ENCODE measurements at regions of chr9 and their contacts with region 1.

Region 1: GRCh38 chr9:109440797-109441287 is 57.3 kb downstream of the PTPN3 start:
- DNase-seq: peak; percentile 82 to 90
- ATAC-seq: peak; percentile 96
- H3K4me3 ChIP-seq: no peak overlapping the region
- H3K27ac ChIP-seq: peak overlapping the region; percentile 34 to 57; a peak in 5 of 6 replicates
- H3K4me1 ChIP-seq: peaks cover 20% of the 10 kb centered on the region
- CTCF ChIP-seq: peak; percentile 85
- EP300 ChIP-seq: no peak
- POLR2A ChIP-seq: no peak
- RAD21 ChIP-seq: peak; percentile 72 to 80

Region 2: GRCh38 chr9:109422641-109423040 is 18.2 kb before region 1 on chr9:
- CTCF ChIA-PET with region 1: interaction called, 26 read pairs
- POLR2A ChIA-PET with region 1: no interaction called
- DNase-seq: no peak
- ATAC-seq: no peak
- H3K4me3 ChIP-seq: no peak overlapping the region
- H3K27ac ChIP-seq: no peak overlapping the region
- H3K4me1 ChIP-seq: no peaks in the 10 kb centered on the region
- CTCF ChIP-seq: no peak
- EP300 ChIP-seq: no peak
- POLR2A ChIP-seq: no peak
- RAD21 ChIP-seq: no peak

Region 3: DNA sequence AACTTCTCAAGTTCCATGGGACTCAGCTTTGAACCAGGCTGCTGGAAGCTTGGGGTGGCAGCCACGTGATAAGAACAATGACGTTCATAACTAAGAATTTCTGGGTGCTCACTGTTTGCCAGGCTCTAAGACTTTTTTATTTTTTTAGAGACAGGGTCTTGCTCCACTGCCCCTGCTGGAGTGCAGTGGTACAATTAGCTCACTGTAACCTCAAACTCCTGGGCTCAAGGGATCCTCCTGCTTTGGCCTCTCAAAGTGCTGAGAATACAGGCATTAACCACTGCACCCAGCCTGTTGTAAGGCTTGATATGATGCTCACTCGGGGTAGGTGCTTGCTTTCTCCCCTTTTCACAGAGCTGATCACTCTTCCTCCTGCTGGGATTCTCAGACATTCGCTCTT is 18.6 kb after region 1 on chr9:
- CTCF ChIA-PET with region 1: interaction called, 147 read pairs
- POLR2A ChIA-PET with region 1: no interaction called
- DNase-seq: no peak
- ATAC-seq: peak in 1 of 2 experiments; percentile 60; a peak in 3 of 6 replicates
- H3K4me3 ChIP-seq: no peak overlapping the region
- H3K27ac ChIP-seq: 0 out of 6 replicates have a peak overlapping the region, but pooled peaks of 1 of the 2 experiments have one; percentile 7
- H3K4me1 ChIP-seq: peaks cover 13% of the 10 kb centered on the region
- CTCF ChIP-seq: no peak
- EP300 ChIP-seq: no peak
- POLR2A ChIP-seq: no peak
- RAD21 ChIP-seq: no peak

Region 4: GRCh38 chr9:109483744-109484429 is 43.0 kb after region 1 on chr9:
- CTCF ChIA-PET with region 1: interaction called, 13 read pairs
- POLR2A ChIA-PET with region 1: no interaction called
- DNase-seq: no peak
- ATAC-seq: no peak; a peak in 1 of 6 replicates
- H3K4me3 ChIP-seq: no peak overlapping the region
- H3K27ac ChIP-seq: no peak overlapping the region
- H3K4me1 ChIP-seq: peaks cover 24% of the 10 kb centered on the region
- CTCF ChIP-seq: no peak
- EP300 ChIP-seq: no peak
- POLR2A ChIP-seq: no peak
- RAD21 ChIP-seq: no peak

Region 5: DNA sequence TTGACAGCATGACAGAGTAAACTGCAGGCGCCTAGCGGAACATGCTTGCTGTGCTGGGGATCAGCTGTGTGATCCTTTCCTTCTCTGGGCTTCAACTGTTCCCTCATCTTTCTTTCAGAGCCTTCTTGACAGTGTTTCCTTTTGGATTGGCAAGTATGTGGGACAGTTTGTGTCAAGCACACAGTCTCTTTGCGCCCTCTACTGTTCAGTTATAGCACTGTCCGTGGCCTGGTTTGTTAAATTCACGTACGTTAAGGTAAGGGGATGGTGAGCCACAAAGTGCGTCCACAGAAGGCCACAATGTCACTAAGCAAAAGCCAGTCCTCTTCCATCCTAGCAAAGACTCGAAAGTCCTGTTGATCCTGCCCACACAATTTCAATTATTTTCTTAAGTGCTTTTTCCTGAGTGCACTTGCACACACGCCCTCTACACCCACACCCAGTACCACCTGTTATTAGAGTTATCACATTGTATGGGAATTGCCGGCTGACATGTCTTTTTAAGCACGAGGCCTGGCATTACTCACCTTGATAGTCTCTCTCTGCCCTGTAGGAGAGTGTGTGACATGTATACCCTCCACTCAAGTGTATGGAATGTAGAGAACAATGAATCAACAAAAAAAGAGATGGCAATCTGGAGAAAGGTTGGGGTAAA is 79.8 kb after region 1 on chr9:
- CTCF ChIA-PET with region 1: interaction called, 74 read pairs
- POLR2A ChIA-PET with region 1: no interaction called
- DNase-seq: peak; percentile 81
- ATAC-seq: peak; percentile 95 to 98
- H3K4me3 ChIP-seq: no peak overlapping the region
- H3K27ac ChIP-seq: no peak overlapping the region
- H3K4me1 ChIP-seq: no peaks in the 10 kb centered on the region; the same call in 2 of the 3 replicates
- CTCF ChIP-seq: peak; percentile 95
- EP300 ChIP-seq: no peak
- POLR2A ChIP-seq: no peak
- RAD21 ChIP-seq: peak; percentile 96 to 97

Measured in A549 (cell line).